ENCODE measurements at regions of chr4 and their contacts with region 1.

Region 1: DNA sequence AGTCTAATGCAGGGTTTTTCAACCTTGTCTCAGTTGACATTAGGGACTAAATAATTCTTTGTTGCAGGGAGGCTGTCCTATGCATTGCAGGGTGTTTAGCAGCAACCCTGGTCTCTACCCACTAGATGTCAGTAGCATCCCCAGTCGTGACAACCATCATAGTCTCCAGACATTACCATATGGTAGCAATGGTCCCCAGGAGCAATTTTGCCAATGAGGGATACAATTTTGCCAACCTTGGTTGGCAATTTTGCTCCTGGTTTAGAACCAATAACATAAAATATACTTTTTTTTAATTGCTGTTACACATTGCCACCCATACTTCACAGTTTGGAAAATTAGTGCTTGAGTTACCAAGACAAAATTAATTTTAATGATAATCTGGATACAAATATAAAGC is 6.0 kb downstream of the EREG start:
- DNase-seq: peak in 13 of 42 donors; percentile 5 to 45 (median 15)

Region 2: DNA sequence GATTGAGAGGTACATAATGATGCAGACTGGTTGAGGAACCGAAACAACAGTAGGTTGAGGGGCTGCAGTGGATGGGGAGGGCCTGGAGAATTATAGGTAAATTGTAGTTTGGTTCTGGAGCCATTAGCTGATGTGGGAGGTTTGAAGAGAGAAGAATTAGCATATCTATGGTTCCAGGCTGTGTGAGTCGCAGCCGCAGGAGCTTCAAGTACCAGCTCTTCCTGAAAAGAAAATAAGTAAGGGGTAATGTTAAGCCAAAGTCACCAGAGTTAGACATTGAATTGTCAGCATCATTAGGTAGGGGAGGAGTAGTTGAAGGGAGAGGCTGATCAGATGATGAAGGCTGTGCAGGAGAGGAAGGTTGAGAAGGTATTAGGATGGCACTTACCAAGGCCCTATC is 418.6 kb before region 1 on chr4:
- intact Hi-C with region 1: no loop called
- DNase-seq: no peak

Region 3: DNA sequence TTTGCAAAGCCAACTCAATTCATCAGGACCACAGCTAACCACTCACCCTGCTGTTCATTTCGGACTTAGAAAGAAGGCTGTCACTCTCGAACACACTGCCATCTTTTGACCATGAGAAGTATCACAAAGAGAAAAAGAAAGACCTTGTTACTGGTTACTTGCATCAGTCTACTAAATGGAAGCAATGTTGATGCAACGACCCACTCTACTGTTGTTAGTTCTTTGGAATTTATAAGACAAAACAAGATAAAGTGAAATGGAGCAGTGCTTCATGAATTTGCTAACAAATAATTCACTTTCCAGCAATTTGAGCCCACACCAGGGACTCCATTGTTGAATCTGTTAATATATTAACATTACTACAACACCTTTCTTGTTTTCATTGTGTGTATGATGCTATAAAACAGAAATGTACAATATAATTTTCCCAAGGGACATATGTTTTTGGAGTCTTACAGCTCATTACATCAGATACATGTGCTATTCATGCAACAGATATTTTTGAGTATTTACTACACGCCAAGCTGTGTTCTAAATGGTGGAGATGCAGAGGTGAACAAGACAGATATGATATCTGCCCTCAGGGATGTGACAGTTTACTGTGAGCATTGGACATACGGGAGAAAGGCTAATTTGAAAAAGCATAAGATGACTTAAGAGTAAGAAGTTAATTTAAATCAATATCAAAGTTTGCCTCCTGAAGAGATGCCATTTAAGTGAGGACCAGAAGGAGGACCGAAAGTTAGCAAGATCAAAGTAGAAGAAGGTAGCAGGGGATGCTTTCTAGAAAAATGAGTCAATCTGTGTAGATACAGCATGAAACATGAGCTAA is 161.3 kb after region 1 on chr4:
- intact Hi-C with region 1: loop called (anchors 10 kb)
- DNase-seq: peak in 11 of 42 donors; percentile 10 to 51 (median 15)

Region 4: DNA sequence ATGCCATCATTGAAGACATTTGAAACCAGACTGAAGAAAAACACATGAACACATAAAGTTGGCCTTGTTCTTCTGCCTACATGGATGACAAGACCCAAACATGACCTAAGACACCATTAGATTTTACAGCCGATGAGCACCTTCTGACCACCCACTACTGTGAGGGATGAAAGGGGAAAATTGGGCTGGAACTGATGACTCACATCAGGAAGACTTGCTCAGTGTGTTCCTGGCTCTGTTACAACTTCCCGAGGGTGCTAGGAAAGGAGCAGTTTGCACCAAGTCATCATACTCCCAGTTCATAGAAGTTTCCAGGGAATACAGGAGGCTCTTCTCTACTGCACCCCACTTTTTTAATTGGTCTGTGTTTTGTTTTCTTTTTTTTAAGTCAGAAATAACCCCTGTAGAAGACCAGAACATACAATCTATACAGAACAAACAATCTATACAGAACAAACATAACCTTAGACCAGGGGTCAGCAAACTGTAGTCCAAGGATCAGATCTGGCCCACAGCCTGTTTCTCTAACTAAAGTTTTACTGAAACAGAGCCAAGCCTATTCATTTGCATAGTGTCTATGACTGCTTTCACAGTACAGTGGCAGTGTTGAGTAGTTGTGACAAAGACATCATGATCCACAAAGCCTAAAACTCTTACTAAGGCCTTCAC is 398.1 kb after region 1 on chr4:
- intact Hi-C with region 1: no loop called
- DNase-seq: no peak